ENCODE measurements at regions of chr4 and their contacts with region 1.

Region 1: DNA sequence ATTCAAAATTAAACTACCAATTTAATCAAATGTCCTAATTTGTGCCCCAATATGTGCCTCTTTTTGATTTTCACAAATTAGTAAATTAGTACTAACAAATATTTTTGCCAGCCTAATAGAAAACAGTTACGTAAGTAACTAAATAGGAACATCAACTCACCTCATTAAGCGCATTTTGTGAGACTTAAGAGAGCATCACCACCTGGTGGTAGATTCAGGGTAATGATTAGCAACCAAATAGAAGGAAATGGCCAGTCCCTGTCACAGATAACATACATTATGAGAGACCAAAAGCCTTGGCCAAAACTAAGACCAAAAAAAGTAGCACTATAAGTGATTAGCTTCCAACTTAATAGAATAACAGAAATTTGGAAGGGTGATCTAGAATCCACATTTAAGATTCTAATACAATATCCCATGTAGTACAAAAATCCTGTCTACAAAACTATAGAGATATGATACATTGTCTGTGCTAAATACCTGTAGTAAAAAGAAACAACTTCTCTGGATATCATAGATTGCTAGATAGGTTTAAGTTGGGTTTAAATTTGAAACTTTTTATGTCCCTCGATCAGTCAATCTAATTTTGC is 46.7 kb downstream of the C4orf46 start:
- DNase-seq: peak; percentile 73
- ATAC-seq: peak; percentile 79
- H3K4me3 ChIP-seq: no peak overlapping the region
- H3K27ac ChIP-seq: no peak overlapping the region
- H3K4me1 ChIP-seq: no peaks in the 10 kb centered on the region
- H3K27me3 ChIP-seq: no peaks in the 10 kb centered on the region; the same call in 1 of the 2 replicates
- CTCF ChIP-seq: peak; percentile 82
- POLR2A ChIP-seq: no peak
- RAD21 ChIP-seq: peak; percentile 85

Region 2: DNA sequence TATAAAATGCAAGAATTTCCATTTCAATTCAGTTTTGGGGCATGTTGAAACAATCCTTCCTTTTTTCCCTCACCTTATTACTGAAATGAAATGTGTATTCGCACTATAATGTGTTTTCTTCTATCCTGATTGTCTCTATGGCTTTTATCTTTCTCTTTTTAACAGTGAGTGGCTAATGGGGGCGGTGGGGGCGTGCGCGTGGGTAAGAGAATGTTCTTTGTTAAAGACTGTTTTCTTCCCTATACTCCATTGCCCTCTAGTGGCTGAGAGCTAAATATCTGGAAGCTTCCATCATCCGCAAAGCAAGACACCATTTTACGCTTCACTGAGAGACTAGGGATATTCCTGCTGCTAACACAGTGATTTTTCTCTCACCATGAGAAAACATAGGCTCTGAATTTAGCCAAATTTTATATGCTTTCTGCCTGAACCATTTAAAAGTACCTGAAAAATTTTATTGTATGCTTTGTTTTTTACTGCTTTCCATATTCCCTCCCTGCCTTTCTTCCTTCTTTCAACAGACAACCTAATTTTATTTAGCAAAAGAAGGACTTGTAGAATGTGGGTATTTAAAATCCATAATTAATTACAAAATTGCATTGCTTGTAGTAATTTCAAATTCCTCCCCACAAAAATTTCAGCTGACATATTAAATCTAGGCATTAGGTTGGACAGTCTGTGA is 646.2 kb before region 1 on chr4:
- CTCF ChIA-PET with region 1: no interaction called
- POLR2A ChIA-PET with region 1: no interaction called
- dilution Hi-C with region 1: no loop called
- in situ Hi-C with region 1: loop called (anchors 25 kb)
- intact Hi-C with region 1: no loop called
- DNase-seq: peak; percentile 64
- ATAC-seq: peak; percentile 95
- H3K4me3 ChIP-seq: no peak overlapping the region; the same call in 1 of the 2 replicates
- H3K27ac ChIP-seq: no peak overlapping the region
- H3K4me1 ChIP-seq: no peaks in the 10 kb centered on the region
- H3K27me3 ChIP-seq: no peaks in the 10 kb centered on the region; the same call in 1 of the 2 replicates
- CTCF ChIP-seq: peak; percentile 78
- POLR2A ChIP-seq: no peak
- RAD21 ChIP-seq: peak; percentile 81

Region 3: DNA sequence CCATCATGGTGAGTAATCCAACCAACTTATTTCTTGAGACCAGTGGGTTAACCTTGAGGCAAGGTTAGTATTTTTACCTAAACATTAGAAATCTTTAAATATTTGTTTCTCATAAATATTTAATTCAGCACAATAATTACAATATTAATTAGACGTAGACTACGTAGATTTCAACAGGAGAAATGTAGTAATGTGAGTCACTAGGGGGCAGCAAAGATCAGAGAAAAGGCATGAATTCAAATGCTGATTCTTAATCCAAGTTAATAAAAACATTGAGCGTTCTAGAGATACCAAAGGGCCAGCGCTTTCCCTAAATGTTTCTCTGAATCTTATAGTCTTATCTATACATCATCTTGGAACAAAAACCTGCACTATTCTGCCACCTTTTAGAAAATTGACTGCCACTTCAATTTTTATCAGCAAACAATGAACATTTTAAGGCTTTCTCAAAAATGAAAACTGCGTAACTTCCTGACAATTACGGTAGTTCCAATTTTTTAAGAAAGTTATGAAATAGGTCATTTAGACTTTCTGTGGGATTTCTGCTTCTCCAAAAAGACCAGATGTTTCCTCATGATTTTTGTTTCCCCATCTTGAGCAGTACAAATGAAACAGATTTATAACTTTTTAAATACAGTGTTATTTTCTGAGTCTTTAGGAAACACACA is 632.8 kb before region 1 on chr4:
- CTCF ChIA-PET with region 1: no interaction called
- POLR2A ChIA-PET with region 1: no interaction called
- dilution Hi-C with region 1: no loop called
- in situ Hi-C with region 1: loop called (anchors 25 kb)
- intact Hi-C with region 1: loop called (anchors 5 kb)
- DNase-seq: peak; percentile 77
- ATAC-seq: peak; percentile 81
- H3K4me3 ChIP-seq: no peak overlapping the region
- H3K27ac ChIP-seq: no peak overlapping the region
- H3K4me1 ChIP-seq: peaks cover 6% of the 10 kb centered on the region
- H3K27me3 ChIP-seq: no peaks in the 10 kb centered on the region; the same call in 1 of the 2 replicates
- CTCF ChIP-seq: peak; percentile 87
- POLR2A ChIP-seq: no peak
- RAD21 ChIP-seq: peak; percentile 90

Region 4: DNA sequence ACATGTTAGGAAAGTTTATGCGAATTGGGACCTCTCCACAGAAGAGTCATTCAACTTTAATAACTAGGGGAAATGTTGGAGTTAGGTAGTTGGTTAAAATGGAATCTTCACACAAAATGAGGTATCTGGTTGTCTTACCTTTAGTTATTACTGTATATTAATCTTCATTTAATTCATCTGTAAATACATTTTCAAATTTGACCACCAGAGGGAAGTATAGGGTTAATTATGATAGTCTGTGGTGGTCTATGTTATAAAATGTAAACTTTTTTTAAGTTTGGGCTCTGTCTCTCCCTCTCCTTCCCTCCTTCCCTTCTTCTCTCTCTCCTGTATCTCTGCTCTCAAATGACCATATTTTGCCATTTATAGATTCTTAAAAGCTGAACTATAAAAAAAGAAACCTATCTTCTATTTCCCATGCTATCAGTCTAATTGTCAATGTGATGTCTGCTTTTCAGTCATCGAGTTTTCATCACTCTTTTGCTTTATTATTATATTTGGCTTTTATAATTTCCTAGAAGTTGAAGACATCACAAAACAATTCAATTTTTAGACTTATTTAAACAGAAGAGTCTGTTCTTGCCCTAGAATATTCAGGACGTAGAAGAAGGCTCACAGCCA is 364.9 kb before region 1 on chr4:
- CTCF ChIA-PET with region 1: interaction called, 11 read pairs
- POLR2A ChIA-PET with region 1: no interaction called
- dilution Hi-C with region 1: no loop called
- in situ Hi-C with region 1: loop called (anchors 5 kb)
- intact Hi-C with region 1: loop called (anchors 1 kb)
- DNase-seq: peak; percentile 42
- ATAC-seq: peak; percentile 83
- H3K4me3 ChIP-seq: no peak overlapping the region
- H3K27ac ChIP-seq: no peak overlapping the region
- H3K4me1 ChIP-seq: no peaks in the 10 kb centered on the region
- H3K27me3 ChIP-seq: no peaks in the 10 kb centered on the region
- CTCF ChIP-seq: peak; percentile 54
- POLR2A ChIP-seq: no peak
- RAD21 ChIP-seq: peak; percentile 70

Region 5: DNA sequence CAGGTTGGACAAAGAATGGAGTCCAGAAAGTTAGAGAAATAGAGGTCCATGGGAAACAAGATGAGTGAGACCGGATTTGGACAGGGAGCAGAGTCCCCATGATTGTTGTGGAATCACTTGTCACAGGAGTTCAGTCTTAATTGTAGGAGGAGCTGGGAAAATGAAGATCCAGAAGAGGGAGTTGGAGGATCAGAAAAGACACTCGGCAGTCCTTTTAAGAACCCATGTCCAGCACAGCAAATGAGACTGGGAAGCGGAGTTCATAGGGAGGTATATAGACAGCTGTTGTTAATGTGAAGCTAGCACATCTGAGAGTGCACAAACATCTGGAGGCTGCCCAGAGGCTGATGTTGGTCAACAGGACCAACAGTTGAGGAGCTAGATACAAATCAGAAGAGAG is 214.7 kb before region 1 on chr4:
- CTCF ChIA-PET with region 1: no interaction called
- POLR2A ChIA-PET with region 1: no interaction called
- dilution Hi-C with region 1: no loop called
- in situ Hi-C with region 1: no loop called
- intact Hi-C with region 1: loop called (anchors 1 kb)
- DNase-seq: peak; percentile 22
- ATAC-seq: peak; percentile 32
- H3K4me3 ChIP-seq: no peak overlapping the region
- H3K27ac ChIP-seq: no peak overlapping the region
- H3K4me1 ChIP-seq: no peaks in the 10 kb centered on the region
- H3K27me3 ChIP-seq: no peaks in the 10 kb centered on the region
- CTCF ChIP-seq: 0 out of 2 replicates have a peak, but pooled peaks have one; percentile 22
- POLR2A ChIP-seq: no peak
- RAD21 ChIP-seq: no peak

Region 6: GRCh38 chr4:158664806-158665205 is 39.8 kb after region 1 on chr4:
- CTCF ChIA-PET with region 1: no interaction called
- POLR2A ChIA-PET with region 1: no interaction called
- dilution Hi-C with region 1: no loop called
- in situ Hi-C with region 1: no loop called
- intact Hi-C with region 1: no loop called
- DNase-seq: no peak
- ATAC-seq: no peak
- H3K4me3 ChIP-seq: no peak overlapping the region
- H3K27ac ChIP-seq: no peak overlapping the region
- H3K4me1 ChIP-seq: no peaks in the 10 kb centered on the region
- H3K27me3 ChIP-seq: no peaks in the 10 kb centered on the region
- CTCF ChIP-seq: no peak
- POLR2A ChIP-seq: no peak
- RAD21 ChIP-seq: no peak

Region 7: GRCh38 chr4:159206427-159206871 is 581.5 kb after region 1 on chr4:
- CTCF ChIA-PET with region 1: no interaction called
- POLR2A ChIA-PET with region 1: no interaction called
- dilution Hi-C with region 1: no loop called
- in situ Hi-C with region 1: no loop called
- intact Hi-C with region 1: loop called (anchors 2 kb)
- DNase-seq: peak; percentile 76
- ATAC-seq: peak; percentile 81
- H3K4me3 ChIP-seq: no peak overlapping the region
- H3K27ac ChIP-seq: no peak overlapping the region
- H3K4me1 ChIP-seq: peaks cover 3% of the 10 kb centered on the region
- H3K27me3 ChIP-seq: no peaks in the 10 kb centered on the region
- CTCF ChIP-seq: no peak
- POLR2A ChIP-seq: no peak
- RAD21 ChIP-seq: no peak